ENCODE measurements at regions of chr1 and their contacts with region 1.

Region 1: DNA sequence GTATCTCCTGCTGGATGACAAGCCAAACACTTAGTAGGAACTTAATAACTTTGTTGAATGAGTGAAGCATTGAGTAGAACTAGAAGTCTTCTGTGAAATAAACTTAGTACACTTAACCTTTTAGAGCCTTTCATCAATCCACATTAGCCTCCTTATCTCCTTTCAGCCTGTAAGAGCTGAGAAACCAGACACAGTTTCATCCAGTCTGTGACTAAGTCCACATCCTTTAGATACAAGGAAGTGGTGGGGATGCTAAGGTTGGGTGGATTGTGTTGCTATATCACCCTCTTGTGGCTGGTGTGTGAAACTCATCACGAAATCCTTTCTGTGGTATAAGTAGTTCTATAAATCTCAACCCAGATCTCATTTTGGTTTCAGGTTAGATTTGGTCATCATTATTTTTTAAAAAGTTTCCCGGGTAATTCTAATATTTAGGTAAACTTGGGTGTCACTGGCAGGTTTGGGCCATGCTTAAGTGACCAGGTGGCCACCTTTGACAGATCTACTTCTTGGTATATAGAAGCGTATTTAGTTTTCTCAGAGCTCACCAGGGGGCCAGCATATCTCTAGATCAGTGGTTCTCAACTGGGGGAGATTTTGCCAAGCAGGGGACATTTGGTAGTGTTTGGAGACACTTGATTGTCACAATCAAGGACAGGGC is 27.8 kb upstream of the CD84 start:
- DNase-seq: peak; percentile 88
- ATAC-seq: peak; percentile 94
- H3K4me3 ChIP-seq: no peak overlapping the region
- H3K4me3 Mint-ChIP-seq: peak overlapping the region; percentile 54
- H3K27ac ChIP-seq: peak overlapping the region; percentile 13 to 68
- H3K27ac Mint-ChIP-seq: peak overlapping the region; percentile 89
- H3K4me1 ChIP-seq: peaks cover 20 to 28% of the 10 kb centered on the region in 2 donors
- H3K4me1 Mint-ChIP-seq: peaks cover 32% of the 10 kb centered on the region
- H3K27me3 ChIP-seq: no peaks in the 10 kb centered on the region
- H3K27me3 Mint-ChIP-seq: no peaks in the 10 kb centered on the region
- CTCF ChIP-seq: peak; percentile 82

Region 2: DNA sequence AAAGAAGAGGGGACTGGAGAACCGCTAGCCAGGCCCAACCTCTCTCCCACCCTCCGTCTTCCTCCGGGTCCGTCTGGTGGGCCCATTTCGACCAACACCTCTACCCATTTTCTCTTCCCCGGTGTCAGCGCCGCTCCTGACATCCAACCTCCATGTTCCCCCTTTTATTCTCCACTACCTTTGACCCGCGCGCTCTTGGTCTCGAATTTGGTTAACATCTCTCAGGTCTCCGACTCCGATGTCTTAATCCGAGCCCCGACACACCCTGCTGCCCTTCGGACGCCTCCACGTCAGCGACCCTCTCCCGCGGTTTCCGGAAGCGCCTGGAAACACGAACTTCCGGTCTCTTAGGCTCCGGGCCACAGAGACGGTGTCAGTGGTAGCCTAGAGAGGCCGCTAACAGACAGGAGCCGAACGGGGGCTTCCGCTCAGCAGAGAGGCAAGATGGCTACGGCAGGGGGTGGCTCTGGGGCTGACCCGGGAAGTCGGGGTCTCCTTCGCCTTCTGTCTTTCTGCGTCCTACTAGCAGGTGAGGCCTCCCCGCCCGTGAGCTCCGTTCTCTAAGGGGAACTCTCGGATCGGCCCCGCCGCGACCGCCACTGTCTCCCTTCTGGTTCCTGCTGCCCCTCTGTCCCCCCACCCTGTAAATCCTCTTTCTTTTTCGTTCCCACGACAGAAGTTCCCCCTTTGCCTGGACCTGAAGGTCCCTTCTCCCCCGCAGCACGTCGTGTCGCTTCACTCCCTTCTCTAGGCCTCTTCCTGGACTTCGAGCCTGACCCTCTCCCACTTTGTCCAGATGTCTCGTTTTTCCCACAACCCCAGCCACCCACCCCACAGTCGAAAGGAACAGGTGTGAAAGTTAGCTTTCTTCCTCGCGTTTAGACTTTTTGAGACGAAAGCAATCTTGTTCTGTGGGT is 263.9 kb before region 1 on chr1 and contains the starts of genes COPA and NCSTN:
- CTCF ChIA-PET with region 1: interaction called, 8 read pairs
- POLR2A ChIA-PET with region 1: no interaction called
- intact Hi-C with region 1: loop called (anchors 5 kb)
- DNase-seq: peak; percentile 97
- ATAC-seq: peak; percentile 91
- H3K4me3 ChIP-seq: peak within 1 kb of the TSS; percentile 90 to 100 (median 98)
- H3K4me3 Mint-ChIP-seq: peak within 1 kb of the TSS; percentile 99
- H3K27ac ChIP-seq: peak within 1 kb of the TSS; percentile 89 to 95
- H3K27ac Mint-ChIP-seq: peak within 1 kb of the TSS; percentile 99
- H3K4me1 ChIP-seq: peaks cover 46 to 54% of the 10 kb centered on the region in 2 donors
- H3K4me1 Mint-ChIP-seq: peaks cover 71% of the 10 kb centered on the region
- H3K27me3 ChIP-seq: no peaks in the 10 kb centered on the region
- H3K27me3 Mint-ChIP-seq: no peaks in the 10 kb centered on the region
- CTCF ChIP-seq: no peak
- total RNA-seq, gene COPA: 168 and 180 TPM in 2 replicates
- total RNA-seq, gene NCSTN: 95.1 and 110 TPM in 2 replicates

Region 3: GRCh38 chr1:160376525-160377131 is 230.5 kb before region 1 on chr1:
- CTCF ChIA-PET with region 1: interaction called, 11 read pairs
- POLR2A ChIA-PET with region 1: no interaction called
- intact Hi-C with region 1: loop called (anchors 1 kb)
- DNase-seq: peak; percentile 76
- ATAC-seq: peak; percentile 67
- H3K4me3 ChIP-seq: peak overlapping the region in 1 of 5 experiments; percentile 21
- H3K4me3 Mint-ChIP-seq: peak overlapping the region; percentile 70
- H3K27ac ChIP-seq: no peak overlapping the region
- H3K27ac Mint-ChIP-seq: peak overlapping the region; percentile 60
- H3K4me1 ChIP-seq: peaks cover 19 to 23% of the 10 kb centered on the region in 2 donors
- H3K4me1 Mint-ChIP-seq: peaks cover 24% of the 10 kb centered on the region
- H3K27me3 ChIP-seq: no peaks in the 10 kb centered on the region
- H3K27me3 Mint-ChIP-seq: no peaks in the 10 kb centered on the region
- CTCF ChIP-seq: peak; percentile 83

Region 4: DNA sequence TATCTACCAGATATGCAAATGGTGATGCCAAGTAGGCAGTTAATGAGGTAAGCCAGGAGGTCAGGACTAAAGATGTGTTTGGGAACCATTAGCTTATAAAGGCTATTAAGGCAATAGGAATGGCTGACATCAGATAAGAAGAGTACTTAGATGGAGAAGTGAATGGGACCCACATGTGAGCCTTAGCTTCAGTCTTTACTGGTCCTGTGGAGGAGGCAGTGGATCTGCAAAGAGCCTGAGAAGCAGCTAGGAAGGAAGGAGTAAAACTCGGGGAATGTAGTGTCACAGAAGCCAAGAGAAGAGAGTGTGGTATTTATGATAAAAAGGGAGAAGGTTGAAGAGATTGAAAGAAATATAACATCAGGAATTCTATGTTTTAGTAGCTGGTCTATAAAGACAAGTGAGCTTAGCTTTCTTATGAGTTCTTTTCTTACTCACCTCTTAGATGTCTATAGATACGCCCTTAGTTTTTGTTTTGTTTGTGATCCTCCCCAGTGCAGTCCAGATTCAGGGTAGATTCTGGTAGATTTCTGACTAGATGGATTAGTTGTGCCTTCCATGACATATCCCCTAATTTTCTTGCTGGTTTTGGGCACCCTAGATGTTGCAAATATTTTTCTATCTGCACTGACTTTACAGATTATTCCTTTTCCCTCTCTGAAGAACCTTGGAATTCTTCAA is 123.5 kb before region 1 on chr1:
- CTCF ChIA-PET with region 1: interaction called, 30 read pairs
- POLR2A ChIA-PET with region 1: no interaction called
- intact Hi-C with region 1: loop called (anchors 5 kb)
- DNase-seq: no peak
- ATAC-seq: no peak
- H3K4me3 ChIP-seq: no peak overlapping the region
- H3K4me3 Mint-ChIP-seq: peak overlapping the region; percentile 15
- H3K27ac ChIP-seq: peak overlapping the region; percentile 35 to 50
- H3K27ac Mint-ChIP-seq: peak overlapping the region; percentile 89
- H3K4me1 ChIP-seq: peaks cover 70 to 73% of the 10 kb centered on the region in 2 donors
- H3K4me1 Mint-ChIP-seq: peaks cover 50% of the 10 kb centered on the region
- H3K27me3 ChIP-seq: no peaks in the 10 kb centered on the region
- H3K27me3 Mint-ChIP-seq: no peaks in the 10 kb centered on the region
- CTCF ChIP-seq: no peak

Region 5: DNA sequence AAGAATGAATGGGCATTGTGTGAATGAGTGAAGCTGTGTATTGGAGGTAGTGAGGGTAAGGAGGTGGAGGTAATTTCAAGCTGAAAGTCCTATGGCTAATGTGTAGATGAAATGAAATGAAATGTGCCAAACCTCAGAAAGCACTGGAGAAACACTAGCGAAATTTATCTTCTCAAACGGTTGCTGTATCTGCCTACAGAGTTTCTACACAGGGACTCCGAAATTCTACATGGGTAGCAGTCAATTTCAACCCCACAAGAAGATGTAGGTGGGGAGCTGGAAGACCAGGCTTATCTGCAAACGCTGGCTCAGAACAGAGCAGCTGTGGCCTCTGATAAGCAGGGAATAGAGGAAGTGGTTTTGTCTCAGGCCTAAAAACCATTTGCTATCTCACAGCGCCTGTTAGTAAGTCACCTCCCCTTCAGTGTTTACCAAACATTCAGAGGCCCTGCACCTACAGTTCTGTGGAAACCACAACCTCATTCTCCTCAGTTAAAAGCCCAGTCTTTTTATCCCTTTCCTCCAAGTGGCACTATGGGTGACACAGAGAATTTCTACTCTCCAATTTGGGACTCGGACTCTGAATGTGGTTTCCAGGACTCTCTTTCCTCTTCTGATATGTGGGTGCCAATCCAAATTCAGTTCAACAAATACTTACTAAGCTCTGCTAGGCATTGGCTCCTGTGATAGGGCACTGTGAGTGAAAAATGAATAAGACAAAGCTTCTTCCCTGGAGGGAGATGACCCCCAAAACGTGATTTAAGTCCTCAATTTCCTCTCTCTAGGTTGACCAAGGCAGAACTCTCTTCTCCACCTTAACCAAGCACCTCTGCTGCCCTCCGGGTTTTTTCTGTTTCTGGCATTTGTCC is 66.9 kb before region 1 on chr1:
- CTCF ChIA-PET with region 1: interaction called, 159 read pairs
- POLR2A ChIA-PET with region 1: no interaction called
- intact Hi-C with region 1: loop called (anchors 1 kb)
- DNase-seq: peak; percentile 81
- ATAC-seq: peak; percentile 97
- H3K4me3 ChIP-seq: peak overlapping the region in 1 of 5 experiments; percentile 19
- H3K4me3 Mint-ChIP-seq: peak overlapping the region; percentile 63
- H3K27ac ChIP-seq: peak overlapping the region; percentile 72 to 90
- H3K27ac Mint-ChIP-seq: peak overlapping the region; percentile 93
- H3K4me1 ChIP-seq: peaks cover 46% of the 10 kb centered on the region in 2 donors
- H3K4me1 Mint-ChIP-seq: peaks cover 48% of the 10 kb centered on the region
- H3K27me3 ChIP-seq: no peaks in the 10 kb centered on the region
- H3K27me3 Mint-ChIP-seq: no peaks in the 10 kb centered on the region
- CTCF ChIP-seq: no peak

Region 6: GRCh38 chr1:160575112-160575664 is 32.0 kb before region 1 on chr1:
- CTCF ChIA-PET with region 1: interaction called, 21 read pairs
- POLR2A ChIA-PET with region 1: no interaction called
- intact Hi-C with region 1: no loop called
- DNase-seq: peak; percentile 78
- ATAC-seq: peak; percentile 74
- H3K4me3 ChIP-seq: peak overlapping the region in 3 of 5 experiments; percentile 9 to 89 (median 27)
- H3K4me3 Mint-ChIP-seq: peak overlapping the region; percentile 76
- H3K27ac ChIP-seq: peak overlapping the region; percentile 59 to 74
- H3K27ac Mint-ChIP-seq: peak overlapping the region; percentile 90
- H3K4me1 ChIP-seq: peaks cover 52 to 53% of the 10 kb centered on the region in 2 donors
- H3K4me1 Mint-ChIP-seq: peaks cover 76% of the 10 kb centered on the region
- H3K27me3 ChIP-seq: no peaks in the 10 kb centered on the region
- H3K27me3 Mint-ChIP-seq: no peaks in the 10 kb centered on the region
- CTCF ChIP-seq: no peak

Region 7: DNA sequence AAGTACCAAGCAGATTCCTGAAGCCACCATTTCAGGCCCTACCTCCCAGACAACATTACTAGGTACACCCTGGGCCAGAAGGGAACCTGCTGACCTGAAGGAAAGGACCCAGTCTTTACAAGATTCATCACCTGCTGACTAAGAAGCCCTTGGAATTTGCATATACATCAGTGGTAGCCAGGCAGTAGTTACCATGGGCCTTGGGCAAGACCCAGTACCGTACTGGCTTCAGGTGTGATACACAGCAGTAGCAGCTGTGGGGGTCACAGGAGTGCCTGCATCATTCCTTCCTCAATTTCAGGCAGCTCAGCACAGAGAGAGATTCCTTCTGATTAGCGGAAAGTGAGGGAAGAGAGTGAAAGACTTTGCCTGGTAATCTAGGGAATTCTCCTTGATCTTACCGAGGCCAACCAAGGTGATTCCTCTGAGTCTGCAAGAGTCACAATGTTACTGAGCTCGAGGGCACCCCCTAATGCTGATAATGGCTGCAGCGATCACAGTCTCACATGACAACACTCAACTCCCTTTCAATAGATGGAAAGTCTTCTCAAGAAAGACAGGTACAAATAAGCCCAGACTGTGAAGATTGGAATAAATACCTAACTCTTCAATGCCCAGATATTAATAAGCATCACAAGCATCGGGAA is 1868.5 kb after region 1 on chr1:
- CTCF ChIA-PET with region 1: no interaction called
- POLR2A ChIA-PET with region 1: no interaction called
- intact Hi-C with region 1: no loop called
- DNase-seq: no peak
- ATAC-seq: no peak
- H3K4me3 ChIP-seq: no peak overlapping the region
- H3K4me3 Mint-ChIP-seq: no peak overlapping the region
- H3K27ac ChIP-seq: no peak overlapping the region
- H3K27ac Mint-ChIP-seq: no peak overlapping the region
- H3K4me1 ChIP-seq: no peaks in the 10 kb centered on the region
- H3K4me1 Mint-ChIP-seq: no peaks in the 10 kb centered on the region
- H3K27me3 ChIP-seq: peaks cover 0 to 5% (median 0%) of the 10 kb centered on the region in 4 experiments
- H3K27me3 Mint-ChIP-seq: peaks cover 18% of the 10 kb centered on the region
- CTCF ChIP-seq: no peak